H1 (cell line): ENCODE measurements at regions of chr12 and their contacts with region 1.

Region 1: DNA sequence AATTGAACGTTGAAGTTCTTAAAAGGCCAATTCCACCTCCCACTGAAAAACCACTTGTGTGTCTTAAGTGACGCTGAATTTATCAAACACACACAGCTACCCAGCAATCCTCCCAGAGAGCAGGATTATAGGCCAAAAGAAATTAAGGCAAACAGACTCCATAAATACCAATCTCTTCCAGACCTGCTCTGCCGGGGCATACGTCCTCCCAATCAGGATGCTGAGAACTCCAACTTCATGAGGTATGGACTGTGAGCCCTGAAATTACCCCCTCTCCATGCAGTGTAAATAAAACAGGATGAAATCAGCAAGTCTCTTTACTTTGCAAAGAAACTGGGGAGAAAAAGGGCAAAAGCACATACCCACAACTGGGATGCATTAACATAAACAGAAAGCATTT is 265.2 kb downstream of the KSR2 start:
- DNase-seq: no peak
- H3K4me3 ChIP-seq: no peak overlapping the region
- H3K27ac ChIP-seq: no peak overlapping the region
- H3K4me1 ChIP-seq: peaks cover 0 to 15% (median 2%) of the 10 kb centered on the region in 4 experiments; a peak in 4 of 7 replicates
- H3K27me3 ChIP-seq: no peaks in the 10 kb centered on the region
- CTCF ChIP-seq: no peak
- EP300 ChIP-seq: no peak
- POLR2A ChIP-seq: no peak
- RAD21 ChIP-seq: no peak

Region 2: DNA sequence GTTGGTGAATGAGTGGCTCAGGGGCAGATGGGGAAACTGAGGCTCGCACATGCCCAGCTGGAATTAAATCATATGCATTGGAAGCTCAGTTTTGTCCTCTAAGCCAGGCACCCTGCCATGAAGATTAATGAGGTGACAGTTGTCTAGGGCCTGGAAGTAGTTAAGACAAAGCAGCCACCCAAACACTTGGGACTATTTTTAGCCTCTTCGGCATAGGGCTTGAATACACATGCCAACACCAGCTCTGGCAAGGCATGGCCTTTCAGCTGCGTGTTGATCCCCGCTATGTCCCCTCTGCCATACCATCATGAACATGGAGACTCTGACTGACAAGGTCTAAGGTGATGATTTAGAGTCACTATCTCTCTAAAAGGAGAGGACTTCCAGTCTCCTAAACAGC is 15.0 kb after region 1 on chr12:
- CTCF ChIA-PET with region 1: interaction called, 10 read pairs
- POLR2A ChIA-PET with region 1: no interaction called
- DNase-seq: no peak
- H3K4me3 ChIP-seq: no peak overlapping the region
- H3K27ac ChIP-seq: no peak overlapping the region
- H3K4me1 ChIP-seq: no peaks in the 10 kb centered on the region; a peak in 1 of 7 replicates
- H3K27me3 ChIP-seq: no peaks in the 10 kb centered on the region
- CTCF ChIP-seq: no peak
- EP300 ChIP-seq: no peak
- POLR2A ChIP-seq: no peak
- RAD21 ChIP-seq: no peak